ENCODE measurements at regions of chr1 and their contacts with region 1.

Region 1: GRCh38 chr1:94599095-94599813 is 57.7 kb upstream of the F3 start:
- DNase-seq: peak; percentile 55
- H3K4me3 Mint-ChIP-seq: no peak overlapping the region
- H3K27ac Mint-ChIP-seq: peak overlapping the region; percentile 72
- H3K4me1 Mint-ChIP-seq: peaks cover 68% of the 10 kb centered on the region
- H3K27me3 Mint-ChIP-seq: no peaks in the 10 kb centered on the region
- CTCF ChIP-seq: peak; percentile 22

Region 2: DNA sequence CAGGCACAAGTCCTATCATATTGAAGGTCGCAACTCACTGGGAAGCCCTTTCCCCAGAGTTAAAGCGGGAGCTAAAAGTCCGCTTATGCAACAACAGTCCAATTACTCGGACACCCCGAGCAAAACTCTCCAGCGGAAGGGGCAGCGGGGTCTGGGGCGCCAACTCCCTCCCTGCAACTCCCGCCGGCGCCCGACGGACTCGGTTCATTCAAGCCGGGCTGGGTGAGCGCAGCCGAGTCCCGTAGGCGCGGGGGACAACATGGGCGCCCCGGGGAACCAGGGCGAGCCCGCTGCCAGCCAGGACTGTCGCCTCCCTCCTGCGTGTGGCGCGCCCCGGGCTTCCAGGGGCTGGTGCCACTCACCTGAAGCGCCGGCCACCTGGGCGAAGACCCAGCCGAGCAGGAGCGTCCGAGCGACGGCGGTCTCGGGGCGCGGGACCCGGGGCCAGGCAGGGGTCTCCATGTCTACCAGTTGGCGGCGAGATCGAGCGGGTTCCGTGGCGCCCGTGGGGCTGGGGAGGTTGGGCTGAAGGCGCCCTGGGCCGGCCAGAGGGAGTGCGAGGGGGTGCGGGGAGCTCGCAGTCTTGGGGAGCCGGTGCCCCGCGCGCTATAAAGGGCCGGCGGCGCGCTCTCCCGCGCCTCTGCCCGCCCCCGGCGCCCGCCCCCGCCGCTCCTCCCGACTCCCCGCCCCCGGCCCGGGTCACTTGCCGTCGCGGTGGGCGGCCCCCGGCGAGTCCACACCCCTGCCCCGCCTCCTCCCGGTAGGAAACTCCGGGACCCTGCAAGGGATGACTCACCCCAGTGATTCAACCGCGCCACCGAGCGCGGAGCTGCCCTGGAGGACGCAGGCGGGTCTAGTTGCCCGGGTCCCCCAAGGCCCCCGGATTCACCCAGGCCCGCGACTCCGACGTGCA is 57.8 kb before region 1 on chr1 and contains the start of gene F3:
- CTCF ChIA-PET with region 1: interaction called, 3 read pairs
- intact Hi-C with region 1: loop called (anchors 1 kb)
- DNase-seq: peak; percentile 98
- H3K4me3 Mint-ChIP-seq: peak within 1 kb of the TSS; percentile 75
- H3K27ac Mint-ChIP-seq: peak within 1 kb of the TSS; percentile 60
- H3K4me1 Mint-ChIP-seq: peaks cover 32% of the 10 kb centered on the region
- H3K27me3 Mint-ChIP-seq: no peaks in the 10 kb centered on the region
- CTCF ChIP-seq: no peak
- total RNA-seq, gene F3: 344 and 387 TPM in 2 replicates

Measured in Calu3 (cell line).